Naive thymus-derived CD4-positive, alpha-beta T cell (primary cell): ENCODE measurements at regions of chr2 and their contacts with region 1.

Region 1: GRCh38 chr2:207529330-207530159 is at the start of gene CREB1:
- DNase-seq: peak; percentile 99 to 100 (median 100)
- ATAC-seq: peak; percentile 87
- H3K4me3 ChIP-seq: peak within 1 kb of the TSS; percentile 75
- H3K4me3 Mint-ChIP-seq: peak within 1 kb of the TSS; percentile 95 to 100 (median 99)
- H3K27ac ChIP-seq: peak within 1 kb of the TSS; percentile 100
- H3K27ac Mint-ChIP-seq: peak within 1 kb of the TSS; percentile 98 to 100 (median 100)
- H3K4me1 ChIP-seq: peaks cover 52 to 59% of the 10 kb centered on the region in 2 donors
- H3K4me1 Mint-ChIP-seq: peaks cover 45 to 85% (median 69%) of the 10 kb centered on the region in 7 donors
- H3K27me3 ChIP-seq: no peaks in the 10 kb centered on the region
- H3K27me3 Mint-ChIP-seq: peaks cover 0 to 7% (median 0%) of the 10 kb centered on the region in 5 donors
- total RNA-seq, gene CREB1: 89.7 to 141 (median 115) TPM

Region 2: GRCh38 chr2:206800506-206801417 is 728.8 kb before region 1 on chr2:
- CTCF ChIA-PET with region 1: interaction called, 4 read pairs
- POLR2A ChIA-PET with region 1: interaction called, 4 read pairs
- intact Hi-C with region 1: loop called in 1 of 2 experiments (anchors 1 kb)
- DNase-seq: peak in 8 of 9 donors; percentile 20 to 61 (median 53)
- ATAC-seq: peak; percentile 67
- H3K4me3 ChIP-seq: no peak overlapping the region
- H3K4me3 Mint-ChIP-seq: peak overlapping the region; percentile 52 to 85 (median 79)
- H3K27ac ChIP-seq: peak overlapping the region; percentile 23
- H3K27ac Mint-ChIP-seq: peak overlapping the region; percentile 1 to 86 (median 37)
- H3K4me1 ChIP-seq: peaks cover 0 to 4% of the 10 kb centered on the region in 2 donors
- H3K4me1 Mint-ChIP-seq: peaks cover 15 to 32% (median 24%) of the 10 kb centered on the region in 7 donors
- H3K27me3 ChIP-seq: no peaks in the 10 kb centered on the region
- H3K27me3 Mint-ChIP-seq: no peaks in the 10 kb centered on the region

Region 3: GRCh38 chr2:207334624-207335371 is 194.7 kb before region 1 on chr2:
- CTCF ChIA-PET with region 1: interaction called, 4 read pairs
- POLR2A ChIA-PET with region 1: no interaction called
- intact Hi-C with region 1: loop called in 1 of 2 experiments (anchors 5 kb)
- DNase-seq: peak in 1 of 9 donors; percentile 57
- ATAC-seq: no peak
- H3K4me3 ChIP-seq: no peak overlapping the region
- H3K4me3 Mint-ChIP-seq: peak overlapping the region in 2 of 10 donors; percentile 20 to 59
- H3K27ac ChIP-seq: no peak overlapping the region
- H3K27ac Mint-ChIP-seq: peak overlapping the region in 1 of 9 donors; percentile 84
- H3K4me1 ChIP-seq: peaks cover 0 to 20% of the 10 kb centered on the region in 2 donors
- H3K4me1 Mint-ChIP-seq: peaks cover 9 to 75% (median 17%) of the 10 kb centered on the region in 7 donors
- H3K27me3 ChIP-seq: no peaks in the 10 kb centered on the region
- H3K27me3 Mint-ChIP-seq: no peaks in the 10 kb centered on the region

Region 4: DNA sequence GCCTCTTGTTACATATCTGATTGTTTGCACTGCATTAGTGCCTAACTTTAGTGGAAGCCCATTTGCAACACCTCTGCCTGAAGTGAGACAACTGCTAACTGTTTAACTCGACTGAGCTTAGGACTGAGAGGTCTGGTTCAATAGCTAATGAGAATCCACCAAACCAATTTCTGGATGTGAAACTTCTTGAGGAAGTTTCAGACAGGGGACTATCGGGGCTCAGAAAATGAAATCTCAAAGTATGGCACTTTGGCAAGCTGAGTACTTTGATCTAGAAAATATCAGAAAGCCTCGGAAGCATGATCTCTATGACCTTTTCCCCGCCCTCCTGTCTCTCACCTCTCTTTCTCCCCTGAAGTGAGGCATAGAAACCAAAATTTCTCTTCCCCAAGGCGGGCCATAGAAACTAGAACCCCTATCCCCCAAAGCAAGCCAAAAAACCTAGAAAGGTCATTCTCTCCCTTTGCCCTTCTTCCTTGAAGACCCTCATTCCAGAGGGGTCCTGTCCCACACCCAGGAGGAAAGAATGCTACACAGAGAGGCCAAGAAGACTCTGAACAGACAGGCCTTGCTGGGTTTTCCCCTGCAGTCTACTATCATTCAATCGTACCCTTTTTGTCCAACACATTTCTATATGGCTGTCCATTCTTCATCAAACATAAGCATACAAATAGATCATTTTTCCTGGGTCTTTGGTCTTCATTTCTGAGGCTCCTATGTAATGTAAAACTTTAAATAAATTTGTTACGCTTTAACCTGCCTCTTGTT is 69.4 kb before region 1 on chr2:
- CTCF ChIA-PET with region 1: no interaction called
- POLR2A ChIA-PET with region 1: no interaction called
- intact Hi-C with region 1: no loop called
- DNase-seq: no peak
- ATAC-seq: no peak
- H3K4me3 ChIP-seq: no peak overlapping the region
- H3K4me3 Mint-ChIP-seq: no peak overlapping the region
- H3K27ac ChIP-seq: no peak overlapping the region
- H3K27ac Mint-ChIP-seq: peak overlapping the region in 2 of 9 donors; percentile 28 to 56
- H3K4me1 ChIP-seq: no peaks in the 10 kb centered on the region
- H3K4me1 Mint-ChIP-seq: peaks cover 0 to 20% (median 4%) of the 10 kb centered on the region in 7 donors
- H3K27me3 ChIP-seq: no peaks in the 10 kb centered on the region
- H3K27me3 Mint-ChIP-seq: no peaks in the 10 kb centered on the region

Region 5: DNA sequence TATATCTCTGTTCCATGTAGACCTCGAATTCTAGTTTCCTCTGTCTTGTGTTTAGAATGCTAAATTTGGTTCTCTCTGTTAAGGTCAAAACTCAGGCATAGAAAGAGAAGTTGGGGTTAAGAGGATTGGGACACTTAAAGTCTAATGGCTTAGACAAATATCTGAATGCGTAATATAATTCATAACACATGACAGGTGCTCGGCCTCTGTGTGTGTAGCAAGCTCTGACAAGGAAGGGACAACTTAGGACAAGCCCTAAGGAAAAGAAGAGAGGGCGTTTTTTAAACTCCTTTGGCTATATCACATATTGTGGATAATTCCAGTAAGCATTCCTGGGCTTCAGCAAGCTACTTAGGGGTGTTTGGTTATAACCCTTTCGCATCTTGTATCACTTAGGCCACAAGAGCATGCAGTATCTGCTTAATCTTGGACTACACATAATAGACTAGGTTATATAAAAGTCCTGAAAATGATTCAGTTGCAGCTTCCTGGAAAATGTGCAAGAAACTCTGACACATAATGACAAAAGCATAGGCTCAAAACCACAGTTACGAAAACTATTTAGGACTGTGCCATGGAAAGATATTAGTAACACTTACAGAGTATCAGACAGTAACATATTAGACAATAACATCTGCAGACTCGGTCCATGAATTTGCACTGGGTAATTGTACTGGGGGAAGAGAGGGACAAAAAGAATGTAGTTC is 15.8 kb before region 1 on chr2:
- CTCF ChIA-PET with region 1: no interaction called
- POLR2A ChIA-PET with region 1: interaction called, 5 read pairs
- intact Hi-C with region 1: loop called (anchors 1 to 2 kb)
- DNase-seq: no peak
- ATAC-seq: no peak
- H3K4me3 ChIP-seq: no peak overlapping the region
- H3K4me3 Mint-ChIP-seq: no peak overlapping the region
- H3K27ac ChIP-seq: no peak overlapping the region
- H3K27ac Mint-ChIP-seq: peak overlapping the region in 1 of 9 donors; percentile 39
- H3K4me1 ChIP-seq: no peaks in the 10 kb centered on the region
- H3K4me1 Mint-ChIP-seq: peaks cover 0 to 20% (median 6%) of the 10 kb centered on the region in 7 donors
- H3K27me3 ChIP-seq: no peaks in the 10 kb centered on the region
- H3K27me3 Mint-ChIP-seq: peaks cover 0 to 11% (median 0%) of the 10 kb centered on the region in 5 donors

Region 6: GRCh38 chr2:207571370-207571769 is 41.8 kb after region 1 on chr2:
- CTCF ChIA-PET with region 1: no interaction called
- POLR2A ChIA-PET with region 1: interaction called, 14 read pairs
- intact Hi-C with region 1: loop called in 1 of 2 experiments (anchors 2 kb)
- DNase-seq: no peak
- ATAC-seq: no peak
- H3K4me3 ChIP-seq: no peak overlapping the region
- H3K4me3 Mint-ChIP-seq: no peak overlapping the region
- H3K27ac ChIP-seq: no peak overlapping the region
- H3K27ac Mint-ChIP-seq: peak overlapping the region in 1 of 9 donors; percentile 32
- H3K4me1 ChIP-seq: no peaks in the 10 kb centered on the region
- H3K4me1 Mint-ChIP-seq: peaks cover 6 to 24% (median 12%) of the 10 kb centered on the region in 7 donors
- H3K27me3 ChIP-seq: no peaks in the 10 kb centered on the region
- H3K27me3 Mint-ChIP-seq: no peaks in the 10 kb centered on the region

Region 7: DNA sequence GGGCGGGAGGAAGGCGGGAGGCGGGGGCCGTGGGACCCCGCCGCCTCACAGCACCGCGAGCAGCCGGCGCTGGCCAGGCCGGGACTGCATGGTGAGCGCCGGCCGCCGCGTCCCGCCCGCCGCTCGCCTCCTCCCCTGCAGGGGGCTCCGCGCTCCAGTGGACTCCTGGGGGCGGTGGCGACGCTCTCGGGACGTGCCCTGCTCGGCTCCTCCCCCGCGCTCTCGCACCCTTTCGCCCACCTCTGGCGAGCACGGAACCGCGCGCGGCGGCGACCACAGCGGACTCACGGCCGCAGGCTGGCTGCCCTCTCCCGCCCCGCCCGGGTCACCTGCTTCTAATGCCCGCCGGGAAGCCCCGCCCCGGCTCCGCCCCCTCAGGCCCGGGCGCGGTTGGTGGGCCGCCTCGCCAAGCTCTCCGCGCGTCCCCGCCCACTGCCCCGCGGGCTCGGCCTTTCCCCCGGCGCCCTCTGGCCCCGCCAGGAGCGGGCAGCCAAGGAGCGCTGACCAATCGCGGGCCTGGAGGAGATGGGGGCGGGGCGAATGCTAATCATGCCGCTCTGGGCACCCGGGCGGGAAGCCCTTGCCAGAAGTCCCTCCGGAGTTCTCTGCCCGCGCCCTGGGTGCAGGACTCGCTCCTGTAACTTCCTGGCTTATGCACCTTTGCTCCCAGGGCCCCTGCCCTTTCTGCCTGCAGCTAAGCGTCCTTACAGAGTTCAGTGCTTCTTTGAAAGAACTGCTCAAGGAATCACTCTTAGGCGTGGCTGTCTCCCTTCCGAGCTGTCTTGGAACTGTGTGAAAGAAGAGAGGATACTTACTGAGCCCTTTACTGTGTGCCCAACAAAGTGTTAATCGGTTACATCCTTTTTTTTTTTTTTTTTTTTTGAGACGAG is 240.3 kb after region 1 on chr2 and contains the start of gene FZD5:
- CTCF ChIA-PET with region 1: no interaction called
- POLR2A ChIA-PET with region 1: no interaction called
- intact Hi-C with region 1: loop called in 1 of 2 experiments (anchors 5 kb)
- DNase-seq: peak in 8 of 9 donors; percentile 29 to 92 (median 37)
- ATAC-seq: peak; percentile 91
- H3K4me3 ChIP-seq: peak within 1 kb of the TSS; percentile 63
- H3K4me3 Mint-ChIP-seq: peak within 1 kb of the TSS; percentile 87 to 98 (median 94)
- H3K27ac ChIP-seq: no peak within 1 kb of the TSS
- H3K27ac Mint-ChIP-seq: peak within 1 kb of the TSS in 4 of 9 donors; percentile 31 to 81 (median 66)
- H3K4me1 ChIP-seq: peaks cover 20 to 24% of the 10 kb centered on the region in 2 donors
- H3K4me1 Mint-ChIP-seq: peaks cover 9 to 37% (median 29%) of the 10 kb centered on the region in 7 donors
- H3K27me3 ChIP-seq: peaks cover 0 to 3% of the 10 kb centered on the region in 2 donors
- H3K27me3 Mint-ChIP-seq: peaks cover 14 to 64% (median 23%) of the 10 kb centered on the region in 5 donors
- total RNA-seq, gene FZD5: 0.13 to 0.93 (median 0.27) TPM